ENCODE measurements at regions of chr6 and their contacts with region 1.

Region 1: DNA sequence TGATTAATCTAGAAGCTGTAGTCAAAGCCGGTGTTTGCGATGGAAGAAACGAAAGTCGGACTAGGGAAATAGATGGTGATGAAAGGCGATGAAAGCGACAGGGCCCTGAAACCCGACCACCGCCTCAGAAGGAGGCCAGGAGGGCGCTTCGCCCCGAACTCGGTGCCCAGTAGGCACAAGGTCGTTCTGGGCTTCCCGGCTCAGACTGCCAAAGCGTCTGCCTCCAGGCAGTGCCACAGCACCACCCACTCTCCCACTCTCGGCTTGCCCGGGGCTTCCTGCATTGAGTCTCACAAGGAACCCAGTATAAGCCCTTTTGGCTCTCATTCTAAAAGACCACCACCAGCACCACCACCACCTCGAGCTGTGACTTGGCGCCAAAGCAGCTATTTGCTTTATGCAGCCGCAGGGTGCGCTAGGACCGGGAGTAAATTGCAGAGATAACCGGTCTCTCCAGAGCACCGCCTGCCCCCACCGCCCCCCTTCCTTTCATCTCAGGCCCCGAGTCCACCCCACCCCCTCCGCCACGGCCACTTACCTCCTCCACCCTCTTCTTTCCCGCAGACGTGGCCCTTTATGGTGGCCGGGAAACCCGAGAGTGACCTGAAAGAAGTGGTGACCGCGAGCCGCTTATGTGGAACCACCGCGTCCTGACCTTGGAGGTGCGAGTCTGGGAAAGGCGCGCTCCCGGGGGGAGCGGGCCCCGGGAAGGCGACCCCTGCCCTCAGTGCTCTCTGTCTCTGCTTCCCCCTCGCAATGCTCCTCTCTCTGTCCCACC is 2.4 kb downstream of the TCF21 start:
- DNase-seq: peak; percentile 70 to 80 (median 76)
- H3K4me3 ChIP-seq: peak overlapping the region; percentile 63
- H3K27ac ChIP-seq: peak overlapping the region; percentile 90 to 96
- H3K4me1 ChIP-seq: peaks cover 9% of the 10 kb centered on the region
- H3K27me3 ChIP-seq: no peaks in the 10 kb centered on the region
- CTCF ChIP-seq: no peak
- EP300 ChIP-seq: no peak
- POLR2A ChIP-seq: peak; percentile 15

Region 2: DNA sequence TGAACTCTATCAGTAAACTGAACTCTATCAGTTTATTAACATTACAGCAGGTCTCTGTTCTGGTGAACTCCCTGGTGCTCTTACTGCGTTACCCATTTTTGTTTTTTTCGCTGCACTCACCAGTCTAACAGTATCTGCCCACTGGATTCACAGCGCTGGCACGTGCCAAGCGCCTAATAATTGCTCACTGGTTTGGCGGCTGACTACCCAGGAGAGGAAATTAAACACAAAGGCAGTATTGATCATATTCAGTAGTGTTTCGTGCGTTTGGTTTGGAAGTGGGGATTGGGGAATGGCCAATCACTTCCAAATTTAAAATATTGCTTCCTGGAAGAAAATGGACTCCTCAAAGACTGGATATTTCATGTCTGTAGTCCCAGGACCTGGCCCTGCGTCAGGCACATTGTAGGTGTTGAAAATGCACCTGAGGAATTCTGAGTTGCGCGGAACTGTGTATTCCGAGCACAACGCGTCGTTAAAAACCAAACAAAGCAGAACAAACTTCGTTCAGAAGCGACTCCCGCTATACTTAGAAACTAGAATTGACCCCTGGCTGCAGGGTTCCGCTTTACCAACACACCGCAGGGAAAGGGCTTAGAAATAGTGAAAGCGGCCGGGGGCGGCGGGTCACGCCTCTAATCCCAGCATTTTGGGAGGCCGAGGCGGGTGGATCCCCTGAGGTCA is 1078.0 kb before region 1 on chr6:
- intact Hi-C with region 1: loop called in 1 of 4 experiments (anchors 10 kb)
- DNase-seq: peak; percentile 25 to 55 (median 46)
- H3K4me3 ChIP-seq: peak overlapping the region; percentile 62
- H3K27ac ChIP-seq: peak overlapping the region; percentile 47 to 83
- H3K4me1 ChIP-seq: peaks cover 10% of the 10 kb centered on the region
- H3K27me3 ChIP-seq: no peaks in the 10 kb centered on the region
- CTCF ChIP-seq: no peak
- EP300 ChIP-seq: no peak
- POLR2A ChIP-seq: no peak

Region 3: DNA sequence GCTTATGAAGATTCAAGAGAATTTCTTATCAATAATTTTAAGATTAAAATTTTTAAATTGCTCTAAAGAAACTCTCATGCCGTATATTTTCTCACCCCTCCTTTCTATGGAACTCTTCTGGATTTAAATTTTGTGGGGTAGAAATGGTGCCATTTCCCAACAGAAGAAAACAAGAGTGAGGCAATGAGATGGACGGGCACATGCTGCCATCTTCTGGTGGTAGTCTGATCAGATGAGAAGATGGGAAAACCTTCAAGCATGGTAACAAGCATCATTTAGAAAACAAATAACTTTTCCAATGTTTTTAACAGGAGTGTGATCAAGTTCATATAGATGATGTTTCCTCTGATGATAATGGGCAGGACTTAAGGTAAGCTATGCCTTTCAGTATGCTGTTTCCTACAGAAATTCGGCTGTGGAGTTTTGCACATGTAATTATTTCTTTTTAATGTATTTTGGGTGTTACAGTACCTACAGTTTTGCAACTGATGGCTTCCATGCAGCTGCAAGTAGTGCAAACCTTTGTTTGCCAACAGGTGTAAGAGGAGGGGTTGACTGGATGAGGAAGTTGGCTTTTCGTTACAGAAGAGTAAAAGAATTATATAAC is 378.8 kb before region 1 on chr6:
- intact Hi-C with region 1: no loop called
- DNase-seq: peak; percentile 19 to 61 (median 43)
- H3K4me3 ChIP-seq: no peak overlapping the region
- H3K27ac ChIP-seq: no peak overlapping the region
- H3K4me1 ChIP-seq: no peaks in the 10 kb centered on the region
- H3K27me3 ChIP-seq: no peaks in the 10 kb centered on the region
- CTCF ChIP-seq: peak in 1 of 3 donors; percentile 26
- EP300 ChIP-seq: no peak
- POLR2A ChIP-seq: no peak

Region 4: GRCh38 chr6:133768656-133769295 is 122.6 kb before region 1 on chr6:
- intact Hi-C with region 1: loop called in 2 of 4 experiments (anchors 10 kb)
- DNase-seq: peak; percentile 51 to 78 (median 72)
- H3K4me3 ChIP-seq: no peak overlapping the region
- H3K27ac ChIP-seq: peak overlapping the region in 1 of 2 donors; percentile 25
- H3K4me1 ChIP-seq: peaks cover 11% of the 10 kb centered on the region
- H3K27me3 ChIP-seq: no peaks in the 10 kb centered on the region
- CTCF ChIP-seq: no peak
- EP300 ChIP-seq: no peak
- POLR2A ChIP-seq: no peak

Region 5: DNA sequence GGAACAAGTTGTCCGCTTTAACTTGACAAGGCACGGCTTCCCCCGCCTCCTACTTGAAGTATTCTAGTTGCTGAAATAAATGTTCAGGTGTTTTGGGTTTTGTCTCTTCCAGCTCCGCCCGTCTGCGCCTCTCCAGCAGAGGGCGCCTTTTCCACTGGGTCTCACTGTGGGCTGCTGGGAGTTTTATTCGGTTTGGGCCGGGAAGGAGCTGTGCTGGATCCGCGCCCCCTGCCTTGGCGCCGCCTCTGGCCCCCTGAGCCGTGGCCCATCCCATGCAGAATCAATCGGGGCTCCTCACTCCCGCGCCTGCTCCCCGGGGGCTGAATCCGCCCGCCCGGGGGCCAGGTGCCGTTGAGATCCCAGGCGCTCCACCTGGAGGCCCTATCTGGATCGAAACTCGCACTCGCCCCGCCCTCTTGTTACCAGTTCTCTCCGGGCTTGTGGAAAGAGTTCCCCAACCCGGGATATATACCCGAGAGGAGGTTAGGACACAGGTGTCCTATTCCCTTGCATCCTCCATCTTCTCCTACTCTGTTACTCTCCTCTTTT is 53.5 kb before region 1 on chr6:
- intact Hi-C with region 1: loop called in 1 of 4 experiments (anchors 10 kb)
- DNase-seq: peak in 4 of 5 donors; percentile 36 to 62 (median 60)
- H3K4me3 ChIP-seq: peak overlapping the region; percentile 33
- H3K27ac ChIP-seq: no peak overlapping the region
- H3K4me1 ChIP-seq: peaks cover 5% of the 10 kb centered on the region
- H3K27me3 ChIP-seq: no peaks in the 10 kb centered on the region
- CTCF ChIP-seq: peak in 2 of 3 donors; percentile 24
- EP300 ChIP-seq: no peak
- POLR2A ChIP-seq: no peak

Measured in ovary (tissue), 10 donors.